GM12878 (cell line): ENCODE measurements at regions of chr5 and their contacts with region 1.

Region 1: GRCh38 chr5:52948418-52949076 is 40.6 kb upstream of the ITGA2 start:
- DNase-seq: peak; percentile 42
- ATAC-seq: peak; percentile 99
- H3K4me3 ChIP-seq: no peak overlapping the region
- H3K27ac ChIP-seq: no peak overlapping the region
- H3K4me1 ChIP-seq: no peaks in the 10 kb centered on the region
- H3K27me3 ChIP-seq: no peaks in the 10 kb centered on the region
- CTCF ChIP-seq: peak; percentile 72 to 78 (median 76)
- EP300 ChIP-seq: no peak
- POLR2A ChIP-seq: no peak
- RAD21 ChIP-seq: peak; percentile 98

Region 2: GRCh38 chr5:52692039-52692438 is 256.5 kb before region 1 on chr5:
- CTCF ChIA-PET with region 1: no interaction called
- POLR2A ChIA-PET with region 1: no interaction called
- RAD21 ChIA-PET with region 1: no interaction called
- SMC1A ChIA-PET with region 1: no interaction called
- in situ Hi-C with region 1: no loop called
- intact Hi-C with region 1: no loop called
- DNase-seq: no peak
- ATAC-seq: no peak
- H3K4me3 ChIP-seq: no peak overlapping the region
- H3K27ac ChIP-seq: no peak overlapping the region
- H3K4me1 ChIP-seq: no peaks in the 10 kb centered on the region
- H3K27me3 ChIP-seq: no peaks in the 10 kb centered on the region
- CTCF ChIP-seq: no peak
- EP300 ChIP-seq: no peak
- POLR2A ChIP-seq: no peak
- RAD21 ChIP-seq: no peak

Region 3: DNA sequence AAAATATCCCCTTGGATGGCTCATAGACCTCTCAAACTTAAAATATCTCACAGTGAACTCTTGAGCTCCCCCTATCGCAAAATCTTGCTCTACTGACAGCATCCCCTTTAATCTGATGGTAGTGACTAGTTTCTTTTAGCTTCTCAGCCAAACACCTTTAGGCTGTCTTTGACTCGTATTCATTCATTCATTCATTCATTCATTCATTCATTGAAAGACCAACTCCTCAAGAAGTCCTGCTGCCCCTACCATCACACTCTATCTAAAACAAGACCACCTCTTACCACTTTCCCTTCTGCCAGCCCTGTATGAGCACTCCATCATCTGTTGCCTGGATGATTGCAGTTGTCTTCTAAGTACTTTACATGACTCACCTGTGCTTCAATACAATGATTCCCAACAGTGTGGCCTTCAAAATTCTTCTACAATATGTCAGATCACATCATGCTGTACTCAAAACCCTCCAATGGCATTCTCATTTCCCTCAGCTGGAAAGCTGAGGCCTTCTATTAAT is 87.4 kb after region 1 on chr5:
- CTCF ChIA-PET with region 1: interaction called, 27 read pairs
- POLR2A ChIA-PET with region 1: no interaction called
- RAD21 ChIA-PET with region 1: interaction called, 14 read pairs
- SMC1A ChIA-PET with region 1: interaction called, 23 read pairs
- in situ Hi-C with region 1: no loop called
- intact Hi-C with region 1: loop called (anchors 5 kb)
- DNase-seq: no peak
- ATAC-seq: peak; percentile 72
- H3K4me3 ChIP-seq: no peak overlapping the region
- H3K27ac ChIP-seq: no peak overlapping the region
- H3K4me1 ChIP-seq: no peaks in the 10 kb centered on the region
- H3K27me3 ChIP-seq: no peaks in the 10 kb centered on the region
- CTCF ChIP-seq: peak; percentile 26 to 52 (median 44); a peak in 5 of 6 replicates
- EP300 ChIP-seq: no peak
- POLR2A ChIP-seq: no peak
- RAD21 ChIP-seq: peak; percentile 42

Region 4: GRCh38 chr5:53089345-53089991 is 140.9 kb after region 1 on chr5:
- CTCF ChIA-PET with region 1: interaction called, 127 read pairs
- POLR2A ChIA-PET with region 1: interaction called, 8 read pairs
- RAD21 ChIA-PET with region 1: interaction called, 49 read pairs
- SMC1A ChIA-PET with region 1: interaction called, 51 read pairs
- in situ Hi-C with region 1: no loop called
- intact Hi-C with region 1: no loop called
- DNase-seq: peak; percentile 7
- ATAC-seq: peak; percentile 84
- H3K4me3 ChIP-seq: no peak overlapping the region
- H3K27ac ChIP-seq: no peak overlapping the region
- H3K4me1 ChIP-seq: peaks cover 11% of the 10 kb centered on the region
- H3K27me3 ChIP-seq: no peaks in the 10 kb centered on the region
- CTCF ChIP-seq: no peak
- EP300 ChIP-seq: no peak
- POLR2A ChIP-seq: no peak
- RAD21 ChIP-seq: no peak

Region 5: DNA sequence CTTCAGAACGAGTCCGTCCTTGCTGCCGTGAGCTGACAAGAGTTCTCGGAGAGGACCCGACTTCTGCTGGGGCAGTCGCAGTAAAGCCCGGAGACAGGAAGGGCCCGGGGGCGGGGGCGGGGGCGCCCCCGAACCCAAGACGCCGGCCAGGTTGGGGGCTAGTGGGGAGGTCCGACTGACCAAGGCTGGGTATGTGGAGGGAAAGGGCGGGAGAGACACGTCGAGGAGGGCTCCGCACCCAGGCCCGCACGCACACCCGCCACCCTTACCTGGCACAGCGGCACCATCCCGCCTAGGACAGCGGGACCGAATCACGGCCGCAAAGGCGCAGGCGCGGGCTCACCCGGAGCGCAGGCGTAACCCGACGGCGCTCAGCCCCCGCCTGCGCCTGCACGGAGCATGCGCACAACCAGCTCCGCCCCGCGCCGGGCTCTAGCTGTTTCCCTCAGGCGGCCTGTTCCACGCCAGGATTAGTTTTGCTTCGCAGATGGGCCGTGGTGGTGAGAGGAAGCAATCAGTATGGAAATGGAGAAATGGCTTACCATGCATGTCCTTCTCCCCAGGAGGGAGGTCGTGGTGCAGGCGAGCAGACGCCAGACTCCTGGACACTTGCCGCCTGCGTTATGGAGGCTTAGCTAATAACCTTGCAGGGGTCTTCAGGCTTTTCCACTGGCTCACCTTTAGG is 161.0 kb after region 1 on chr5 and contains the start of gene MOCS2:
- CTCF ChIA-PET with region 1: interaction called, 16 read pairs
- POLR2A ChIA-PET with region 1: no interaction called
- RAD21 ChIA-PET with region 1: interaction called, 8 read pairs
- SMC1A ChIA-PET with region 1: interaction called, 4 read pairs
- in situ Hi-C with region 1: no loop called
- intact Hi-C with region 1: no loop called
- DNase-seq: peak; percentile 64
- ATAC-seq: peak; percentile 99
- H3K4me3 ChIP-seq: peak within 1 kb of the TSS; percentile 68
- H3K27ac ChIP-seq: peak within 1 kb of the TSS; percentile 65
- H3K4me1 ChIP-seq: peaks cover 5% of the 10 kb centered on the region; the same call in 1 of the 2 replicates
- H3K27me3 ChIP-seq: no peaks in the 10 kb centered on the region
- CTCF ChIP-seq: no peak
- EP300 ChIP-seq: no peak
- POLR2A ChIP-seq: peak; percentile 97
- RAD21 ChIP-seq: no peak
- polyA plus RNA-seq, gene MOCS2: 23.4 to 24.1 TPM

Region 6: GRCh38 chr5:53219174-53219573 is 270.6 kb after region 1 on chr5:
- CTCF ChIA-PET with region 1: no interaction called
- POLR2A ChIA-PET with region 1: no interaction called
- RAD21 ChIA-PET with region 1: no interaction called
- SMC1A ChIA-PET with region 1: no interaction called
- in situ Hi-C with region 1: no loop called
- intact Hi-C with region 1: no loop called
- DNase-seq: no peak
- ATAC-seq: peak; percentile 95
- H3K4me3 ChIP-seq: no peak overlapping the region
- H3K27ac ChIP-seq: no peak overlapping the region
- H3K4me1 ChIP-seq: no peaks in the 10 kb centered on the region
- H3K27me3 ChIP-seq: no peaks in the 10 kb centered on the region
- CTCF ChIP-seq: no peak
- EP300 ChIP-seq: no peak
- POLR2A ChIP-seq: no peak
- RAD21 ChIP-seq: no peak

Region 7: GRCh38 chr5:54229041-54229780 is 1280.7 kb after region 1 on chr5:
- CTCF ChIA-PET with region 1: interaction called, 10 read pairs
- POLR2A ChIA-PET with region 1: no interaction called
- RAD21 ChIA-PET with region 1: interaction called, 6 read pairs
- SMC1A ChIA-PET with region 1: no interaction called
- in situ Hi-C with region 1: no loop called
- intact Hi-C with region 1: loop called (anchors 10 kb)
- DNase-seq: no peak
- ATAC-seq: peak; percentile 95
- H3K4me3 ChIP-seq: no peak overlapping the region
- H3K27ac ChIP-seq: no peak overlapping the region
- H3K4me1 ChIP-seq: no peaks in the 10 kb centered on the region
- H3K27me3 ChIP-seq: no peaks in the 10 kb centered on the region
- CTCF ChIP-seq: peak; percentile 86 to 94 (median 90)
- EP300 ChIP-seq: no peak
- POLR2A ChIP-seq: no peak
- RAD21 ChIP-seq: peak; percentile 89